GM12878 (cell line): ENCODE measurements at regions of chr22 and their contacts with region 1.

Region 1: GRCh38 chr22:40922484-40923303 is 28.5 kb upstream of the RBX1 start:
- DNase-seq: peak; percentile 47
- ATAC-seq: peak; percentile 88
- H3K4me3 ChIP-seq: no peak overlapping the region
- H3K27ac ChIP-seq: no peak overlapping the region
- H3K4me1 ChIP-seq: no peaks in the 10 kb centered on the region
- H3K27me3 ChIP-seq: no peaks in the 10 kb centered on the region
- CTCF ChIP-seq: peak; percentile 41 to 67 (median 56); a peak in 5 of 6 replicates
- EP300 ChIP-seq: no peak
- POLR2A ChIP-seq: no peak
- RAD21 ChIP-seq: peak; percentile 84

Region 2: GRCh38 chr22:40679964-40680818 is 242.5 kb before region 1 on chr22:
- CTCF ChIA-PET with region 1: interaction called, 5 read pairs
- POLR2A ChIA-PET with region 1: no interaction called
- RAD21 ChIA-PET with region 1: interaction called, 14 read pairs
- SMC1A ChIA-PET with region 1: no interaction called
- in situ Hi-C with region 1: no loop called
- intact Hi-C with region 1: no loop called
- DNase-seq: no peak
- ATAC-seq: no peak
- H3K4me3 ChIP-seq: no peak overlapping the region
- H3K27ac ChIP-seq: no peak overlapping the region
- H3K4me1 ChIP-seq: no peaks in the 10 kb centered on the region
- H3K27me3 ChIP-seq: peaks cover 0 to 3% of the 10 kb centered on the region in 2 experiments; a peak in 3 of 4 replicates
- CTCF ChIP-seq: no peak
- EP300 ChIP-seq: no peak
- POLR2A ChIP-seq: no peak
- RAD21 ChIP-seq: no peak

Region 3: GRCh38 chr22:40950962-40951794 is 28.5 kb after region 1 on chr22 and contains the start of gene RBX1:
- CTCF ChIA-PET with region 1: interaction called, 22 read pairs
- POLR2A ChIA-PET with region 1: interaction called, 14 read pairs
- RAD21 ChIA-PET with region 1: interaction called, 25 read pairs
- SMC1A ChIA-PET with region 1: interaction called, 25 read pairs
- in situ Hi-C with region 1: no loop called
- intact Hi-C with region 1: no loop called
- DNase-seq: peak; percentile 93
- ATAC-seq: peak; percentile 92
- H3K4me3 ChIP-seq: peak within 1 kb of the TSS; percentile 98
- H3K27ac ChIP-seq: peak within 1 kb of the TSS; percentile 99
- H3K4me1 ChIP-seq: peaks cover 2% of the 10 kb centered on the region; the same call in 1 of the 2 replicates
- H3K27me3 ChIP-seq: no peaks in the 10 kb centered on the region
- CTCF ChIP-seq: no peak
- EP300 ChIP-seq: no peak; a peak in 1 of 4 replicates
- POLR2A ChIP-seq: peak; percentile 99
- RAD21 ChIP-seq: 0 out of 2 replicates have a peak, but pooled peaks have one; percentile 1
- polyA plus RNA-seq, gene RBX1: 449 to 468 TPM

Region 4: DNA sequence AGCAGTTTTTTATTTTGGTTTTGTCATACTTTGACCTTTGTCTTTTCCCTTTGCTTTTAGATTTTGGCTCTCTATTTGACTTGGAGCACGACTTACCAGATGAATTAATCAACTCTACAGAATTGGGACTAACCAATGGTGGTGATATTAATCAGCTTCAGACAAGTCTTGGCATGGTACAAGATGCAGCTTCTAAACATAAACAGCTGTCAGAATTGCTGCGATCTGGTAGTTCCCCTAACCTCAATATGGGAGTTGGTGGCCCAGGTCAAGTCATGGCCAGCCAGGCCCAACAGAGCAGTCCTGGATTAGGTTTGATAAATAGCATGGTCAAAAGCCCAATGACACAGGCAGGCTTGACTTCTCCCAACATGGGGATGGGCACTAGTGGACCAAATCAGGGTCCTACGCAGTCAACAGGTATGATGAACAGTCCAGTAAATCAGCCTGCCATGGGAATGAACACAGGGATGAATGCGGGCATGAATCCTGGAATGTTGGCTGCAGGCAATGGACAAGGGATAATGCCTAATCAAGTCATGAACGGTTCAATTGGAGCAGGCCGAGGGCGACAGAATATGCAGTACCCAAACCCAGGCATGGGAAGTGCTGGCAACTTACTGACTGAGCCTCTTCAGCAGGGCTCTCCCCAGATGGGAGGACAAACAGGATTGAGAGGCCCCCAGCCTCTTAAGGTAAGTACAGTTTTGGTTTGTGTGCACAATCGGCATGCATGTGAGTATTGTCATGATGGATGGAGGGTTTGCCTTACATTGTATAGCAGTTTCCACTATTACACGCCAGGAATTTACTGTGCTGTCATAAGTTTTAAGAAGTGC is 194.7 kb after region 1 on chr22:
- CTCF ChIA-PET with region 1: interaction called, 9 read pairs
- POLR2A ChIA-PET with region 1: no interaction called
- RAD21 ChIA-PET with region 1: interaction called, 6 read pairs
- SMC1A ChIA-PET with region 1: interaction called, 16 read pairs
- in situ Hi-C with region 1: no loop called
- intact Hi-C with region 1: no loop called
- DNase-seq: no peak
- ATAC-seq: peak; percentile 50
- H3K4me3 ChIP-seq: no peak overlapping the region
- H3K27ac ChIP-seq: no peak overlapping the region
- H3K4me1 ChIP-seq: no peaks in the 10 kb centered on the region
- H3K27me3 ChIP-seq: no peaks in the 10 kb centered on the region
- CTCF ChIP-seq: no peak
- EP300 ChIP-seq: no peak
- POLR2A ChIP-seq: peak; percentile 47
- RAD21 ChIP-seq: no peak

Region 5: GRCh38 chr22:41146573-41146972 is 223.9 kb after region 1 on chr22:
- CTCF ChIA-PET with region 1: interaction called, 16 read pairs
- POLR2A ChIA-PET with region 1: no interaction called
- RAD21 ChIA-PET with region 1: interaction called, 7 read pairs
- SMC1A ChIA-PET with region 1: interaction called, 6 read pairs
- in situ Hi-C with region 1: no loop called
- intact Hi-C with region 1: loop called (anchors 5 kb)
- DNase-seq: no peak
- ATAC-seq: no peak
- H3K4me3 ChIP-seq: no peak overlapping the region
- H3K27ac ChIP-seq: no peak overlapping the region
- H3K4me1 ChIP-seq: no peaks in the 10 kb centered on the region
- H3K27me3 ChIP-seq: no peaks in the 10 kb centered on the region
- CTCF ChIP-seq: no peak
- EP300 ChIP-seq: no peak
- POLR2A ChIP-seq: no peak
- RAD21 ChIP-seq: no peak

Region 6: DNA sequence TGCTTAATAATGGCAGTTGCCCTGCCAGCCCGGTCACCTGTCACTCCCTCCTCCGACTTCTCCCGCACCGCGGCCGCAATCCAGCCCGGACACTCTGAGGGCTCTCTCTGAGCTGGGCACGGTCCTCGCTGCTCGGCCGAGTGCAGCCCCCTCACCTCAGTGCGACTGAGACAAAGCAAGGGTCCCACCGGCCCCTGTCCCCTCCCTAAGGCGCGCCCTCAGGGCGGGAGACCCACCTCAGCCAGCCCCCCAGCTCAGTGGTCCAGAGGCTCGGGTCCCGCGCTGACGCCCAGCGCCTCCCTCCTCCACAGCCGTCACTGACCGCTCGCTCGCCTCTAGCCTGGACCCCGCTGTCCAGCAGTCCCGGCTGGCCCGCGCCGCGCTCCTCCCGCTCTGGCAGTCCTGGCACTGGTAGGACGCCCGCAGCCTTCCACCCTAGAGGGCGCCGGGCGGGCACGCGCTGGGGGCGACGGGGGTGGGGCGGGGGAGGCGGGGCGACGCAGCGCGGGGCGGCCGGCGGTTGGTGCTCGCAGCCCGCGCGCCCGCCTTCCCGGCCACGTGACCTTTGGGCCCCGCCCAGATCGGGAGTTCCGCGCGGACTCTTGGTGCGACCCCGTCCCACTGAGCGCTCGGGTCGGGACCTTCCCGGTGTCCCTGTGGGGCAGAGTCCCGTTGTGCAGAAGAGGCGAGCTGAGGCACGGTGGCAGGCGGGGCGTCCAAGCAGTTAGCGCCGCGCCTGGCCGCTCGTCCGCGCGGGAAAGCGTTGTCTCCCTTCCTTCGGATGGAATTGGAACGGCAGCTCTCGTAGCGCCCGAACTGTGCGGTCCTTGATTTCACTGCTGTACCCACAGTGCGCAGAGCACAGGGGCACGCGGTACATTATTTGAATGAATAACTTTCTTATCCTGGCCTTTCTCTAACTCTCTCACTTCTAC is 274.6 kb after region 1 on chr22:
- CTCF ChIA-PET with region 1: interaction called, 11 read pairs
- POLR2A ChIA-PET with region 1: interaction called, 3 read pairs
- RAD21 ChIA-PET with region 1: interaction called, 5 read pairs
- SMC1A ChIA-PET with region 1: interaction called, 4 read pairs
- in situ Hi-C with region 1: no loop called
- intact Hi-C with region 1: no loop called
- DNase-seq: no peak
- ATAC-seq: peak; percentile 96
- H3K4me3 ChIP-seq: peak overlapping the region; percentile 90
- H3K27ac ChIP-seq: no peak overlapping the region
- H3K4me1 ChIP-seq: peaks cover 3% of the 10 kb centered on the region
- H3K27me3 ChIP-seq: no peaks in the 10 kb centered on the region
- CTCF ChIP-seq: peak in 1 of 3 experiments; percentile 9; a peak in 1 of 6 replicates
- EP300 ChIP-seq: no peak
- POLR2A ChIP-seq: no peak
- RAD21 ChIP-seq: no peak